Psoas muscle (tissue), 8 donors: ENCODE measurements at regions of chr2 and their contacts with region 1.

Region 1: DNA sequence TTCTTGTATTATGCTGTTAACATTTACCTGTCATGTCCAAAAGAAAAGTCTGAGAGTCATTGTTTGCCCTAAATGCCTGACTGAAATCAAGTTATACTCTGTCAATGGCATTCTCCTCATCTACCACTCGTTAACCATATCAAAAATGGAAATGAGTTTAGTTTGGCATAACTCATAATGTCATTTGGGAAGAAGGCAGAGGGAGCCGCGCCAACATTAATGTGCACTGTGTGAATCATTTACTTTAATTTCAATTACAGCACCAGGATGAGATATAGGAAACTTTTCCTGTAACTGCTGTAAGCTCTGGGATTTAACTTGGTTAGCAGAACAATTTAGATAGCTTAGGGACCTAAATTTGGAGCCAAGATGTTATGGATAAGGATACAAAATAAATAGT is 871.2 kb upstream of the POU3F3 start:
- DNase-seq: no peak
- ATAC-seq: no peak
- H3K4me3 ChIP-seq: no peak overlapping the region
- H3K27ac ChIP-seq: no peak overlapping the region
- H3K4me1 ChIP-seq: no peaks in the 10 kb centered on the region
- H3K27me3 ChIP-seq: no peaks in the 10 kb centered on the region
- CTCF ChIP-seq: no peak

Region 2: DNA sequence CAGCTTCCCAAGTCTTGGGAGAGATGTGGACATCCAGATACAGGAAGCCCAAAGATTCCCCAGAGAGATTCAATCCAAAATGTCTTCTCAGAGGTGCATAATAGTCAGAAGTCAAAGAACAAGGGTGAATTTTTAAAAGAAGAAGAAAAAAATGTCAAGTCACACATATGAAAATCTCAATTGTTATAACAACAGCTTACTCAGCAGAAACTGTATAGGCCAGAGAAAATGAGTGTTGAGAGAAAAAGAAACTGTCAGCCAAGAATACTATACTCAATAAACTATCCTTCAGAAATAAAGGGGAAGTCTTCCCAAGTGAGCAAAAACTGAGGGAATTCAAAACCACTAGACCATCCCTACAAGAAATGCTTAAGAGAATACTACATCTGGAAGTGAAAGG is 258.3 kb after region 1 on chr2:
- intact Hi-C with region 1: loop called in 1 of 2 experiments (anchors 5 kb)
- DNase-seq: no peak
- ATAC-seq: no peak
- H3K4me3 ChIP-seq: no peak overlapping the region
- H3K27ac ChIP-seq: no peak overlapping the region
- H3K4me1 ChIP-seq: no peaks in the 10 kb centered on the region
- H3K27me3 ChIP-seq: no peaks in the 10 kb centered on the region
- CTCF ChIP-seq: no peak

Region 3: GRCh38 chr2:105576440-105577252 is 1594.0 kb after region 1 on chr2:
- intact Hi-C with region 1: no loop called
- DNase-seq: no peak
- ATAC-seq: peak; percentile 50 to 88 (median 60)
- H3K4me3 ChIP-seq: no peak overlapping the region
- H3K27ac ChIP-seq: no peak overlapping the region
- H3K4me1 ChIP-seq: no peaks in the 10 kb centered on the region
- H3K27me3 ChIP-seq: no peaks in the 10 kb centered on the region
- CTCF ChIP-seq: peak; percentile 64